Activated CD4-positive, alpha-beta memory T cell treated with anti-CD3 and anti-CD28 coated beads for 36 hours (primary cell): ENCODE measurements at regions of chr6 and their contacts with region 1.

Region 1: DNA sequence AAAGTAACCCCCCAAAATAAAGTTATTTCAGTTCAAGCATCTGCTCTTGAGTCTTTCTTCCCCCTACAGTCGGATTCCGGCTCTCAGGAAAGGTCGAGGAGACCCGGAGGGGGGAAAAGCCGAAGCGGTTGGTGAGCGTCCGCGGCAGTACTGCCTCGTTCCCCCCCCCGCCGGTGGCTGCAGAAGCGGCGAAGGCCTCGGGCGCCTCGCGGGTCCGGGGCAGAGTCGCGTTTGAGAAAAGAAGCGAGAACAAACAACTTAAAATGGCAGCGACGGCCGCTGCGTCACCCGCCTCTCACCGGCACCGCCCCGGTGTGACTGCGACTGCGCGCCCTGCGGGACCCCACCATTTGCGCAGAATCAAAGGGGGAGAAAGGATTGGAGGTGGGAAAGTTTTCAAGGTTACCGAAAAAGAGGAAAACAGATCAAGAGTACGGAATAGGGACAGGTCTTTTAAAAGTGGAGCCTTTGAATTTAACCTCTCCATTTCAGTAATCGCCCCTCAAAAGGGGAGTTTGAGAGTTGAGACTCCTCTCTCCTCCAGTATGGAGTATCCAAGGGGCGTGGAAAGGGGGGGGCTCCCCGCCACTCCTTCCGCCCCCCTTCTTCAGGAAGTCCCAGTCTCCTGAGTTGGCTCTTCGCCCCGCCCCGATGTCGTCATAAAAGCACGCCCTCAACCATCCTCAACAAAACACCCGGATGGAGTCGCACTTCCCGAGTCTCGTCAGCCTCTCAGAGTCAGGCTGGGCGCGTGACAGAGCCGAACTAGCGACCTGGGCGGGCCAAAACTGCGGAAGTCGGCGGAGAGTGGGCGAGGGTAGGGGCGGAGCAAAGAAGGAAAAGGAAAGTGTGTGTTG is 1.9 kb upstream of the C6orf62 start:
- DNase-seq: peak; percentile 100
- H3K4me3 Mint-ChIP-seq: peak overlapping the region; percentile 100
- H3K27ac Mint-ChIP-seq: peak overlapping the region; percentile 99
- H3K4me1 Mint-ChIP-seq: peaks cover 32% of the 10 kb centered on the region
- H3K27me3 Mint-ChIP-seq: peaks cover 1% of the 10 kb centered on the region

Region 2: GRCh38 chr6:24646782-24647181 is 74.0 kb before region 1 on chr6:
- CTCF ChIA-PET with region 1: interaction called, 3 read pairs
- POLR2A ChIA-PET with region 1: interaction called, 3 read pairs
- intact Hi-C with region 1: loop called (anchors 2 kb)
- DNase-seq: no peak
- H3K4me3 Mint-ChIP-seq: peak overlapping the region; percentile 79
- H3K27ac Mint-ChIP-seq: peak overlapping the region; percentile 38
- H3K4me1 Mint-ChIP-seq: peaks cover 16% of the 10 kb centered on the region
- H3K27me3 Mint-ChIP-seq: peaks cover 17% of the 10 kb centered on the region

Region 3: GRCh38 chr6:24666641-24667377 is 54.0 kb before region 1 on chr6 and contains the starts of genes ACOT13 and TDP2:
- CTCF ChIA-PET with region 1: no interaction called
- POLR2A ChIA-PET with region 1: interaction called, 8 read pairs
- intact Hi-C with region 1: loop called (anchors 1 kb)
- DNase-seq: peak; percentile 98
- H3K4me3 Mint-ChIP-seq: peak within 1 kb of the TSS; percentile 95
- H3K27ac Mint-ChIP-seq: peak within 1 kb of the TSS; percentile 93
- H3K4me1 Mint-ChIP-seq: peaks cover 53% of the 10 kb centered on the region
- H3K27me3 Mint-ChIP-seq: no peaks in the 10 kb centered on the region
- total RNA-seq, gene ACOT13: 33.7 to 35.9 TPM
- total RNA-seq, gene TDP2: 47.5 to 48.6 TPM

Region 4: GRCh38 chr6:24699521-24700359 is 21.1 kb before region 1 on chr6:
- CTCF ChIA-PET with region 1: interaction called, 4 read pairs
- POLR2A ChIA-PET with region 1: interaction called, 16 read pairs
- intact Hi-C with region 1: loop called (anchors 1 kb)
- DNase-seq: no peak
- H3K4me3 Mint-ChIP-seq: no peak overlapping the region
- H3K27ac Mint-ChIP-seq: peak overlapping the region; percentile 88
- H3K4me1 Mint-ChIP-seq: peaks cover 61% of the 10 kb centered on the region
- H3K27me3 Mint-ChIP-seq: no peaks in the 10 kb centered on the region

Region 5: DNA sequence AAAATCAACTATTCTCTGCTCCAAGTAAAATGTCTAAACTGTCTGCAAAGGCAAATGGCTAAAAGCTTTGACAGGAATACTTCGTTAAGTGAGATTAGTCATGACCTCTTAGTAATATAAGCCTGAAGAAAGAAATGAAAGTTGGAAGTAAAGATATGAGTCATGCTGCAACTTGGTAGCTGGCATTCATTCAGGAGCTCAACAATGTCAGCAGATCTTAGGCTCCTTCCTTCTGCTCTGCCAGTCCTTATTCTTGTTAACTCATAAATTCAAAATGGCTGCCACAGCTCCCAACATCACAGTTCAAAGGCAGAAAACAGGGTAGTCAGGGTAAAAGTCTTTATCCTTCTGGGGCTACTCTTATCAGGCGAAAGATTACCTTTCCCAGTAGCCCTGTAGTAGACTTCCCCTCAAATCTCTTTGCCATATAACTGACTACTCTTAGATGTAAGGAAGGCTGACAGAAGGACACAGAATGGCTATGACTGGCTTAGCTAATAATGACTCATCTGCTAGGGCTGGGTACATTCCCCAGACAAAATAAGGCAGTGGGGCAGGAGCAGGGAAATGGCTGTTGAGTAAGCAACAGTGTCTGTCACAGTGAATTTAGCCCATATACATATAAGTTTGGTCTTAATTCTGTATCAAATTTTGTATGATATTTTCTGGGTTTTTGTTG is 22.6 kb after region 1 on chr6:
- CTCF ChIA-PET with region 1: interaction called, 7 read pairs
- POLR2A ChIA-PET with region 1: interaction called, 26 read pairs
- intact Hi-C with region 1: loop called (anchors 1 kb)
- DNase-seq: peak; percentile 66
- H3K4me3 Mint-ChIP-seq: peak overlapping the region; percentile 47
- H3K27ac Mint-ChIP-seq: peak overlapping the region; percentile 91
- H3K4me1 Mint-ChIP-seq: peaks cover 25% of the 10 kb centered on the region
- H3K27me3 Mint-ChIP-seq: peaks cover 1% of the 10 kb centered on the region

Region 6: DNA sequence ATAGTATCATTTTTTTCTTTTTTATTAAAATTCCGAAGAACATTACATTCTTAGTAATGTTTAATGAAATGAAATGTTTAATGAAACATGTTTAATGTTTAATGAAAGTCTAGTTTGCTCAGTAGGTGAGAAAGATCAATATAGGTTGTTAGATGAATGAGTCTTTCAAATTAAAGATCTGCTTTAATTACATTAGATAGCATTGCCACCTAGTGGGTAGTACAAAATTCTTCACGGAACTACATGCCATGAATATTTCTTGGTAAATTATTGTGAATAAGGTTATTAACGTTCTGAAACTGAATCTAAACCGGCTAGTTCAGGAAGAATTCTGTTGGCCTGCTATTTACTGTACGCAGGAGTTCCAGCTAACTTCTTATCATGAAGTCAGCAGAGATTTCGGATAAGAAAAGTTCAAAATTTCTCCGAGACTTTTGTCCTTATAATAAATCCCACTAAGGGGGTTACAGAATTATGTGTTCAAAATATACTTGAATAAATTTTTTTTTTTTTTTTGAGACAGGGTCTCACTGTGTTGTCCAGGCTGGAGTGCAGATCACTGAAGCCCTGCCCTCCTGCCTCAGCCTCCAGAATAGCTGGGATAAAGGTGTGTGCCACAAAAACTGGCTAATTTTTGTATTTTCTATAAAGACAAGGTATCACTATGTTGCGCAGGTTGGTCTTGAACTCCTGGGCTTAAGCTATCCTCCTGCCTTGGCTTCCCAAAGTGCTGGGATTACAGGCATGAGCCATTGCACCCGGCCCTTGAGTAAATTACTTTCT is 46.0 kb after region 1 on chr6:
- CTCF ChIA-PET with region 1: interaction called, 5 read pairs
- POLR2A ChIA-PET with region 1: no interaction called
- intact Hi-C with region 1: loop called (anchors 1 kb)
- DNase-seq: no peak
- H3K4me3 Mint-ChIP-seq: no peak overlapping the region
- H3K27ac Mint-ChIP-seq: no peak overlapping the region
- H3K4me1 Mint-ChIP-seq: peaks cover 4% of the 10 kb centered on the region
- H3K27me3 Mint-ChIP-seq: no peaks in the 10 kb centered on the region

Region 7: DNA sequence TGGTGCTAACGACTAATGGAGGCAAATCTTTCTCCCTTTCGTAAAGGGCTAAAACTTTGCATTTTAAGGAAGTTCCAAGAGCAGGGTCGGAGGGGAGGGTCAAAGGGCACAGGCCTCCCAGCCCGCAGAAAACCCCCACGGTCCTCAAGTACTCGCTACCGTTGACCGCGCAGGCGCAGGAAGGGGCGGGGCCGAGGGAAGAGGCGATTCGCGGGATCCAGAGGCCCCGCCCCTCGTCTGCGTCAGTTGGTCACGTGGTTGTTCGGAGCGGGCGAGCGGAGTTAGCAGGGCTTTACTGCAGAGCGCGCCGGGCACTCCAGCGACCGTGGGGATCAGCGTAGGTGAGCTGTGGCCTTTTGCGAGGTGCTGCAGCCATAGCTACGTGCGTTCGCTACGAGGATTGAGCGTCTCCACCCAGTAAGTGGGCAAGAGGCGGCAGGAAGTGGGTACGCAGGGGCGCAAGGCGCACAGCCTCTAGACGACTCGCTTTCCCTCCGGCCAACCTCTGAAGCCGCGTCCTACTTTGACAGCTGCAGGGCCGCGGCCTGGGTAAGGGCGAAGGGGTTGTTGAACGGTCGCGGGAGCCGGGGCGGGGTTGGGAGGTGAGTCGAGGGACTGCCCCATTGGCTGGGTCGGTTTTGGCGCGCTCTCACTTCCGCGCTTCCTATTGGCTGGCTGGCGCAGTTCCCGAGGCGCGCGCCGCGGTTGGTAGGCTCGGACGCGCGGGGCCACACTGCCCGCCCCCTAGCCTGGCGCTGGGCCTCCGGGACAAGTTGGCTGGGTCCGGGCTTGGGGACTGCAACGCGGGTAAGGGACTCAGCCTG is 54.1 kb after region 1 on chr6 and contains the start of gene GMNN:
- CTCF ChIA-PET with region 1: interaction called, 3 read pairs
- POLR2A ChIA-PET with region 1: interaction called, 24 read pairs
- intact Hi-C with region 1: loop called (anchors 1 kb)
- DNase-seq: peak; percentile 98
- H3K4me3 Mint-ChIP-seq: peak within 1 kb of the TSS; percentile 99
- H3K27ac Mint-ChIP-seq: peak within 1 kb of the TSS; percentile 100
- H3K4me1 Mint-ChIP-seq: peaks cover 27% of the 10 kb centered on the region
- H3K27me3 Mint-ChIP-seq: no peaks in the 10 kb centered on the region
- total RNA-seq, gene GMNN: 76.5 to 77.4 TPM

Region 8: GRCh38 chr6:24809728-24810127 is 88.9 kb after region 1 on chr6:
- CTCF ChIA-PET with region 1: no interaction called
- POLR2A ChIA-PET with region 1: no interaction called
- intact Hi-C with region 1: no loop called
- DNase-seq: no peak
- H3K4me3 Mint-ChIP-seq: no peak overlapping the region
- H3K27ac Mint-ChIP-seq: peak overlapping the region; percentile 8
- H3K4me1 Mint-ChIP-seq: no peaks in the 10 kb centered on the region
- H3K27me3 Mint-ChIP-seq: no peaks in the 10 kb centered on the region